Mucosa of descending colon (tissue), 3 donors: ENCODE measurements at regions of chr7 and their contacts with region 1.

Region 1: GRCh38 chr7:64951250-64951848 is 39.5 kb downstream of the ZNF117 start:
- DNase-seq: peak in 1 of 3 donors; percentile 35
- ATAC-seq: peak; percentile 75
- H3K4me3 ChIP-seq: no peak overlapping the region
- H3K4me1 ChIP-seq: peaks cover 4% of the 10 kb centered on the region
- CTCF ChIP-seq: peak; percentile 52

Region 2: DNA sequence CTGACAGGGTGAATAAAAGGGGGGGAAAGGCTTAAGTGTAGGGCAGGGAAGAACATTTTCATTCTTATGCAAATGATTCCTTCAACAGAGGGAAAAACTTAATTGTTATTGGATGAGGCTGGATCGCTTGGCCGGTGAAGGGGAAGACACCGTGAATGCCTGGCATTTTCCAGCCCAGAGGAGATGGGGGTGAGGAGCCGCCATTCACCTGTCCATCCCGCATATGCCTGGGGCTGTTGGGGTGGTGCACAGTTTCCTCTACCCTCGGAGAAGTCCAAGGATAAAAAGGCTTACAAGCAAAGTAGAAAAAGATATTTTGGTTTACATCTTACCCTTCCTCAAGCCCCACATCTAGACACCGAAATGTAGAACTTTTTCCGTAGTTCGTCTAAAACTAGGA is 584.4 kb before region 1 on chr7:
- intact Hi-C with region 1: no loop called
- DNase-seq: no peak
- ATAC-seq: no peak
- H3K4me3 ChIP-seq: no peak overlapping the region
- H3K4me1 ChIP-seq: no peaks in the 10 kb centered on the region
- CTCF ChIP-seq: no peak

Region 3: DNA sequence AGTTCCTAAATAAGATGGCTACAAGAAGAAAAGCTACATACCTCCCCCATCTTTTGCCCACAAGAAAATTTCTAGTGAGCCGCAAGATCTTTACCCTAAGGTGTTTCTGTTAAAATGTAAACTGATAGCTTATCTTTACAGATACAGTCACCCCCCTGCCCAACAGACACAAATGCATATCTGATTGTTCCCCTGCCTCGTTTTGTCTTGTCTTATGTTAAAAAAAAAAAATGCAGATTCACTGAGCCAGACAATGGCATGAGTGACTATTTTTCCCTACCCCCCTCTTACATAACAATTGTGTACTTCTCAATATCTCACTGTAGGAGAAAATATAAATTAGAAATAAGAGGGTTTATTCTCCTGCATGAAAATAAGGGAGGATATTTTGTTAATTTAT is 148.7 kb before region 1 on chr7:
- intact Hi-C with region 1: no loop called
- DNase-seq: no peak
- ATAC-seq: no peak
- H3K4me3 ChIP-seq: no peak overlapping the region
- H3K4me1 ChIP-seq: no peaks in the 10 kb centered on the region
- CTCF ChIP-seq: no peak

Region 4: DNA sequence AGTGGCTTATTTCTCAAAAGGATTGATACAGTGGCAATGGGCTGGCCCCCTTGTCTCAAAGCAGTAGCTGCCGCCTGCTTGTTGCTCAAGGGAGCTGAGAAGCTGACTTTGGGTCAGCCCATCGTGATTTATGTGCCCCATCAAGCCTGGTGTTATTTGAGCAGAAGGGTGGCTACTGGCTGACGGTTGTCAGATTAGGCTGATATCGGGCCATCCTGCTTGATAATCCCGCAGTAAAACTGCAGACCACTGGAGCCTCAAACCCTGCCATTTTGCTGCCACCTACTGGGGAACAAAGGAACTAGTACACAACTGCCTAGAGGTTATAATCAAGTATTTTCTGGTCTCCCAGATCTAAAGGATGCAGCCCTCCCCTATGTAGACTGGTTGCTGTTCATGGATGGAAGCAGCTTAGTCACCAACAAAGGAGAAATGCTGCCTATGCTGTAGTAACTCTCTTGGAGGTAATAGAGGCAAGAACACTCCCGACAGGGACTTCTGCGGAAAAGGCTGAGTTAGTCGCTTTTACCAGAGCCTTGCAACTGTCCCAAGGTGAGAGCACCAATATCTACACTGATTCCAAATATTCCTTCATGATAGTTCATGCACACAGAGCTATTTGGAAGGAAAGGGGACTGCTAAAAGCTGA is 356.4 kb after region 1 on chr7:
- intact Hi-C with region 1: loop called in 1 of 2 experiments (anchors 5 kb)
- DNase-seq: peak in 2 of 3 donors; percentile 24 to 30
- ATAC-seq: peak; percentile 57
- H3K4me3 ChIP-seq: no peak overlapping the region
- H3K4me1 ChIP-seq: no peaks in the 10 kb centered on the region
- CTCF ChIP-seq: peak; percentile 55

Region 5: GRCh38 chr7:65832281-65832680 is 880.9 kb after region 1 on chr7:
- intact Hi-C with region 1: no loop called
- DNase-seq: peak in 1 of 3 donors; percentile 63
- ATAC-seq: no peak
- H3K4me3 ChIP-seq: no peak overlapping the region
- H3K4me1 ChIP-seq: no peaks in the 10 kb centered on the region
- CTCF ChIP-seq: no peak